ENCODE measurements at regions of chr5 and their contacts with region 1.

Region 1: DNA sequence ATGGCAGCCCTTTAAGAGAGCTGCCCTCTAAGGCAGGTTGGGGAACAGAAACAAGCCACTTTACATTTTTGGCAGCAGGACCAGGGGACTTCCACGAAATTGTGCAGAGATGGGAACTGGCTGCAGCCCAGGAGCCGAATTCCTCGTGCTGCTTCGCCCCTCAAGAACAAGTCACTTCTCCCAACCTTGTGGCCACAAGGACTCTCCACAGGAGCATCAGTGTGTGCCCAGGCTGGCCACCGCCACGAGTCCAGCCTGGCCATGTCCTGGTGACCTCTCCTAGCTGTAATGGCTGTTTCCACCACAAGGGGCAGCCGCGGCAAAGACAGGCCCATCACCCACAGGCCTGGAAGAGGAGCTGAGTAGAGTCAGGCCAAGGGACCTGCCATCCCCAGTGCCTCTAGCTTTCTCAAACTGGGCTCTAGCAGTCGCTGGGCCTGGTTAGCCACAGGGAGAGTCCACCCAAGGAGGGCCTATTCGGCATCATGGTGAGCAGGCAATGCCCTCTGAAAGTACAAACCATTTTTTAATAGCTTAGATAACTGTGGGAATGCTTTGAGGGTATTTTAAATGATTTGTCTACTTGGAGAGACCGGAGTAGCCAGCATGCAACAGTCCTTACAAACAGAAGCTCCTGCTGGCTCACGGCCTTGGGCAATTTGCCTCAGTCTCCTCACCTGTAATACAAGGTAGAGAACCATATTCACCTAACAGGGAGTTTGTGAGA is 129.0 kb downstream of the COL23A1 start:
- DNase-seq: peak; percentile 43
- H3K4me3 ChIP-seq: no peak overlapping the region
- H3K27ac ChIP-seq: no peak overlapping the region
- H3K4me1 ChIP-seq: no peaks in the 10 kb centered on the region
- H3K27me3 ChIP-seq: no peaks in the 10 kb centered on the region
- CTCF ChIP-seq: peak; percentile 73 to 79
- POLR2A ChIP-seq: no peak

Region 2: GRCh38 chr5:178551059-178551458 is 89.9 kb after region 1 on chr5:
- CTCF ChIA-PET with region 1: interaction called, 7 read pairs
- POLR2A ChIA-PET with region 1: no interaction called
- dilution Hi-C with region 1: no loop called
- intact Hi-C with region 1: loop called (anchors 1 kb)
- DNase-seq: peak; percentile 28
- H3K4me3 ChIP-seq: no peak overlapping the region
- H3K27ac ChIP-seq: no peak overlapping the region
- H3K4me1 ChIP-seq: peaks cover 5% of the 10 kb centered on the region
- H3K27me3 ChIP-seq: no peaks in the 10 kb centered on the region
- CTCF ChIP-seq: peak in 1 of 2 donors; percentile 22
- POLR2A ChIP-seq: no peak

Region 3: DNA sequence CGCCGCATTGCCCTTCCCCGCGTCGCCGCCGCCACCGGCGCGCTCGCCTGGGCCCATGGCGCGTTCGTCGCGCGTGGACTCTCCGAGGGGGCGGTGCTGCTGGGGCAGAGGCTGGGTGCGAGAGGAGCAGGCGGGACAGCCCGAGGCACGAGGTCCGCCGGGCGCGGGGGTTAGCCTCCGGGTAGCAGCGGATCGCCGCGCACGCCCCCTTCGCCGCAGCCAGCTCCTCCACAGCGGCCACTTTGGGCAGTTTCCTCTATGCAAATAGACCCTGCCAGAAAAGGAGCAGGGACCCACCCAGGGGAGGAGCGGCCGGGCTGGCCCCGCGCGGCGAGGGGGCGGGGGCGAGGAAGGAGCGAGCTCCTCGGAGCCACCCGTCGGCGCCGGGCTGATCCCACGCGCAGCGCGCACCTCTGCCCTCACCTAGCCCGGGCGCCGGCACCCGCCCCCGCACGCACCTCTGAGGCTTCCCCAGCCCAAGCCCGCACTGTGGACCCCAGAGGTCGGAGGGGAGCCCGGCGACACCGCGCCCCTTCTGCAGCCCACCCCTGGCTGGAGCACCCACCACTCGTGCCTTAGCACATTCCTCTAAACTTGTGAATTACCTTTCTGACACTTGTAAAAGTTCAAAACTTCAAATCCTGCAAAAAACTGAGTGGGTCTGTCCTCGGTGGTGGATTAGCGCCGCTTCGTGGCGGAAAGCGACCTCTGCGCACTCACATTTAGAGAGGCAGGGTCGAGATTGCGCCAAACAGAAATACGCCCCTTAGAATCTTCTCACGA is 129.2 kb after region 1 on chr5 and contains the start of gene COL23A1:
- CTCF ChIA-PET with region 1: no interaction called
- POLR2A ChIA-PET with region 1: no interaction called
- dilution Hi-C with region 1: no loop called
- intact Hi-C with region 1: loop called (anchors 1 kb)
- DNase-seq: peak; percentile 55
- H3K4me3 ChIP-seq: peak within 1 kb of the TSS in 1 of 3 experiments; percentile 29
- H3K27ac ChIP-seq: no peak within 1 kb of the TSS
- H3K4me1 ChIP-seq: peaks cover 6% of the 10 kb centered on the region
- H3K27me3 ChIP-seq: peaks cover 39 to 58% of the 10 kb centered on the region in 2 experiments
- CTCF ChIP-seq: peak; percentile 72 to 77
- POLR2A ChIP-seq: no peak
- total RNA-seq, gene COL23A1: not detected in 2 replicates

Measured in endothelial cell of umbilical vein (primary cell).